Posterior cingulate gyrus (tissue), 11 donors: ENCODE measurements at regions of chr2 and their contacts with region 1.

Region 1: GRCh38 chr2:113977660-113978523 is 88.0 kb downstream of the ACTR3 start:
- DNase-seq: no peak

Region 2: DNA sequence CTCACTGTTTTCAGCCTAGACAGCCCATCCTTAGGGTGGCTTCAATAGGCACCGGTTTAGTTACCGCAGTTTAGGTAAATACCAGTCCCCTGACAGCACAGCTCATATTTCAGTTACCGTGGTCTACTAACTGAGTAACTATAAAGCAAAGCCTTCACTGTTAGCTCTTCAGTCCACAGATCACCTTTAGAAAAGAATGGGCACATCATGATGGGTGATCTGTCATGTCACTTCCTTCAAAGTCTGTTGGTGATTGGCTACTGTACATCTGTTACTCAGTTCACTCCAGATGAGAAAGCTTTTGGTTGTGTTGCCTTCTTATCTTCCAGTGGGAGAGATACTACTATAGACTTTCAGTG is 1311.1 kb before region 1 on chr2:
- intact Hi-C with region 1: no loop called
- DNase-seq: no peak

Region 3: DNA sequence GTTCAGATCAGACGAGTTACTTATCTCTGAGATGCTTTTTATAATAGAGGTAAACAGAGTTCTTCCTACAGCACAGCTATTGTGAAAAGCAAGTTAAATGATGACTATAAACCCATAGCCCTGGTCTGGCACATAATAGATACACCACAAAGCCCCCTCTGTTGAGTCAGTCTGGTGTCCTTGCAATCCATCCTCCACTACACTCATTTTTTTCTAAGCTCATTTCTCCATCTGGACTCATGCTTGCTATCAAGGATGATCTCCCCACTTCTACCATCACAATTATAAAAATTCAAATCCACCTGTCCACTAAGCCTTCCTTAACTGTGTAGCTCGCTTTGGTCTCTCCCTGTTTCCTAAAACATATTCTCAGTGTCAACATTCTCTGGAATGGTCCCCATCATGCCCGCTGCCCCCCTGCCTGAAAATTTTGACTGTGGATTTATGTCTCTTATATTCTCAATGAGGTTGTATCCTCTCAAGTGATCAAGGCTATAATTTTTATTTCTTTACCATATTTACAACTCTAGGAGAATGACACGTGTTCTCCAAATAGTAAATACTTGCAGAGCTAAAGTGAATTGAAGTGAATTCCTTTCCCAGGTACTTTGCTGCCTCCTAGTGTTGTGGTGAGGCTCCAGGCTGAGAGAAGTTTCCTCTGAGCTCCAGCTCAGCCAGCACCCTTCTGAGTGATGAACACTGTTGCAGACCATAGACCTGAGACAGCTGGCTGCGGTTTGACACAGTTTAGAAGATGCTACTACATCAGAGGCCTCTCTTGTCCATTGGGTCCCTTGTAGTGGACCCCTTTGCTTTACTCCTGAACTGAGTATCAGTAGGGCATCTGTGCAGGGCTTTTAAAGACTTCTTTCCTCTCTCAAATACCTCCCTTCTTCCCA is 573.3 kb after region 1 on chr2:
- intact Hi-C with region 1: loop called (anchors 5 kb)
- DNase-seq: peak in 6 of 10 donors; percentile 24 to 90 (median 58)